ENCODE measurements at regions of chr19 and their contacts with region 1.

Region 1: GRCh38 chr19:16714702-16715287 is 4.9 kb upstream of the NWD1 start:
- DNase-seq: peak; percentile 81
- ATAC-seq: peak; percentile 81
- H3K4me3 Mint-ChIP-seq: no peak overlapping the region
- H3K27ac Mint-ChIP-seq: no peak overlapping the region
- H3K4me1 Mint-ChIP-seq: no peaks in the 10 kb centered on the region
- H3K27me3 Mint-ChIP-seq: no peaks in the 10 kb centered on the region
- CTCF ChIP-seq: peak; percentile 97

Region 2: GRCh38 chr19:16703677-16704076 is 11.1 kb before region 1 on chr19:
- CTCF ChIA-PET with region 1: interaction called, 13 read pairs
- POLR2A ChIA-PET with region 1: no interaction called
- DNase-seq: no peak
- ATAC-seq: no peak
- H3K4me3 Mint-ChIP-seq: no peak overlapping the region
- H3K27ac Mint-ChIP-seq: no peak overlapping the region
- H3K4me1 Mint-ChIP-seq: no peaks in the 10 kb centered on the region
- H3K27me3 Mint-ChIP-seq: peaks cover 3% of the 10 kb centered on the region; the same call in 1 of the 2 replicates
- CTCF ChIP-seq: no peak

Region 3: GRCh38 chr19:16737911-16738310 is 23.1 kb after region 1 on chr19:
- CTCF ChIA-PET with region 1: interaction called, 20 read pairs
- POLR2A ChIA-PET with region 1: interaction called, 3 read pairs
- DNase-seq: no peak
- ATAC-seq: no peak
- H3K4me3 Mint-ChIP-seq: no peak overlapping the region
- H3K27ac Mint-ChIP-seq: no peak overlapping the region
- H3K4me1 Mint-ChIP-seq: peaks cover 6% of the 10 kb centered on the region; the same call in 1 of the 2 replicates
- H3K27me3 Mint-ChIP-seq: no peaks in the 10 kb centered on the region
- CTCF ChIP-seq: no peak

Region 4: GRCh38 chr19:16771618-16772017 is 56.8 kb after region 1 on chr19:
- CTCF ChIA-PET with region 1: interaction called, 26 read pairs
- POLR2A ChIA-PET with region 1: no interaction called
- DNase-seq: peak; percentile 90
- ATAC-seq: peak; percentile 95
- H3K4me3 Mint-ChIP-seq: no peak overlapping the region
- H3K27ac Mint-ChIP-seq: no peak overlapping the region
- H3K4me1 Mint-ChIP-seq: no peaks in the 10 kb centered on the region
- H3K27me3 Mint-ChIP-seq: peaks cover 23% of the 10 kb centered on the region
- CTCF ChIP-seq: peak; percentile 82

Measured in WTC11 (cell line).